ENCODE measurements at regions of chr9 and their contacts with region 1.

Region 1: DNA sequence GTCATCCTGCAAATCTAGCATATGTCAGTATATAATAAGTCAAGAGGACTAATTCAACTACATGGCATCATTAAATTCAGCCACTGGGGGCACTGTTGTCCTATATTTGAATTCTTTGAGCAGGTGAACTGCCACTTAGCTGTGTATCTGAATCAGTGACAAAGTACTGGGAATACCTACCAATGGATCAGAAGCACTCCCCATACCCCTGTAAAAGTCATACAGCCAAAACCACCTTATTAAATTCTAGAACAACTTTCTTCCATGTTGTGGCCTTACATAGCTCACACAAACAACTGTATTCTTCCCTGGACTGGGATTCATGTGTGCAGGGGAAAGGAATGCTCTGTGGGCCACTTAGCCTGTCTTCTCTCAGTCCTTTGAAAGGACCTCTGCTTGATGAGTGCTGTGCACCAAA is 57.4 kb upstream of the PLPP6 start:
- DNase-seq: peak; percentile 63 to 73
- H3K4me3 ChIP-seq: no peak overlapping the region
- H3K4me3 Mint-ChIP-seq: no peak overlapping the region
- H3K27ac Mint-ChIP-seq: no peak overlapping the region
- H3K4me1 ChIP-seq: no peaks in the 10 kb centered on the region
- H3K4me1 Mint-ChIP-seq: no peaks in the 10 kb centered on the region
- H3K27me3 ChIP-seq: no peaks in the 10 kb centered on the region
- H3K27me3 Mint-ChIP-seq: no peaks in the 10 kb centered on the region
- CTCF ChIP-seq: peak; percentile 39 to 50

Region 2: DNA sequence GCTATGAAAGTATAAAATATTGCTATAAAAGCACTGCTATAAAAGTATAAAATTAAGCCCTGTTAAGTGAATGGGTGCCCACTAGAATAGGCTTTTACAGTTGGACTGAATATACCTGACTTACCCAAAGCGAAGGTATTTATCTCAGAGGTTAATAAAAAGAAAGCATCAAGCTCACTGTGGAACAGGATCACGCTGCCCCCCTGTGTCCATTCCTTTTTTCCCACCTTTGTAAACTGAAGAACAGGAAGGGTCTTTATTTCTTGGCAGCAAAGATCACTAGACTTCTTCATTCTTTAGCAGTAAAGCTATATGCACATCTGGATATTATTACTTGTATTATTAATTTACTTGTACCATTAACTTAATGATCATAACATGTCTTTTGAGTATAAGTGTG is 35.3 kb after region 1 on chr9:
- CTCF ChIA-PET with region 1: interaction called, 7 read pairs
- POLR2A ChIA-PET with region 1: no interaction called
- intact Hi-C with region 1: loop called (anchors 1 kb)
- DNase-seq: peak in 1 of 2 experiments; percentile 28
- H3K4me3 ChIP-seq: no peak overlapping the region
- H3K4me3 Mint-ChIP-seq: no peak overlapping the region
- H3K27ac Mint-ChIP-seq: no peak overlapping the region
- H3K4me1 ChIP-seq: no peaks in the 10 kb centered on the region
- H3K4me1 Mint-ChIP-seq: no peaks in the 10 kb centered on the region
- H3K27me3 ChIP-seq: no peaks in the 10 kb centered on the region
- H3K27me3 Mint-ChIP-seq: no peaks in the 10 kb centered on the region
- CTCF ChIP-seq: peak; percentile 21 to 45

Region 3: DNA sequence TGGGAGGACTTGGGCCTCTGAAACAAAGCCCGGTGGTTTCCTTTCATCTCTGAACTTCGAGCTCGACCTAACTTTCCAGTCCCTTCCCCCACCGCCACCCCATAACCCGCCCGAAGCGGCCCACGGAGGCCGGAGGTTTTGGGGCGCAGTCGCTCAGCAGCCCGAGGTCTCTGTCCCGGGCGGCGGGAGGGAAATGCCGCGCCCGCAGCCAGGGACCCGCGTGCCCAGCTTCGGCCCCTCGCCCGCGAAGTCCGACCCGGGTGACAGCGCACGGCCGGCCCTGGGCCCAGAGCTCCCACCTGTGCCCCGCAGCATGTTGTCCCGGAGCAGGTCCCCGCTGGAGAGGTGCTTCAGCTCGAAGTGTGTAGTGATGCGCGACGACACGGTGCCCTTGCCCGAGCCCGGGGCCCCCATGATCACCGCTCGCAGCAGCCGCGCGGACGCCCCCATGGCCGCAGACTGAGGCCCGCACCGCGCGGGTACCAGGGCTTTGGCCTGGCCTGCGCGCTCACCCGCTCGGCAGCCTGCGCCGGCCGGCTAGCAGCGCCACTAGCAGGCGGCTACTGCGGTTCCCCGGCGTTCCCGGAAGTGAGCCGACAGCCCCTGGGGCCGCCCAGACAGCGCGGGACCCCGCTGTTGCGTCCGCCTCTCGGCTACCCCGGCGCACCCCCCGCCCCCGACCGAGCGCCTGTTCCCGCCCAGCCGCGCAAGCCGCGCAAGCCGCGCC is 136.1 kb after region 1 on chr9 and contains the start of gene AK3:
- CTCF ChIA-PET with region 1: no interaction called
- POLR2A ChIA-PET with region 1: no interaction called
- intact Hi-C with region 1: loop called (anchors 5 kb)
- DNase-seq: peak; percentile 77 to 85
- H3K4me3 ChIP-seq: peak within 1 kb of the TSS; percentile 78
- H3K4me3 Mint-ChIP-seq: peak within 1 kb of the TSS; percentile 91
- H3K27ac Mint-ChIP-seq: peak within 1 kb of the TSS; percentile 86
- H3K4me1 ChIP-seq: peaks cover 3% of the 10 kb centered on the region; the same call in 1 of the 2 replicates
- H3K4me1 Mint-ChIP-seq: no peaks in the 10 kb centered on the region
- H3K27me3 ChIP-seq: no peaks in the 10 kb centered on the region
- H3K27me3 Mint-ChIP-seq: peaks cover 4% of the 10 kb centered on the region
- CTCF ChIP-seq: no peak
- total RNA-seq, gene AK3: 31.9 and 32.0 TPM in 2 replicates

Measured in Caco-2 (cell line).